ENCODE measurements at regions of chr4 and their contacts with region 1.

Region 1: GRCh38 chr4:158624889-158625478 is 46.7 kb downstream of the C4orf46 start:
- DNase-seq: no peak
- H3K4me3 ChIP-seq: no peak overlapping the region
- CTCF ChIP-seq: peak; percentile 49

Region 2: DNA sequence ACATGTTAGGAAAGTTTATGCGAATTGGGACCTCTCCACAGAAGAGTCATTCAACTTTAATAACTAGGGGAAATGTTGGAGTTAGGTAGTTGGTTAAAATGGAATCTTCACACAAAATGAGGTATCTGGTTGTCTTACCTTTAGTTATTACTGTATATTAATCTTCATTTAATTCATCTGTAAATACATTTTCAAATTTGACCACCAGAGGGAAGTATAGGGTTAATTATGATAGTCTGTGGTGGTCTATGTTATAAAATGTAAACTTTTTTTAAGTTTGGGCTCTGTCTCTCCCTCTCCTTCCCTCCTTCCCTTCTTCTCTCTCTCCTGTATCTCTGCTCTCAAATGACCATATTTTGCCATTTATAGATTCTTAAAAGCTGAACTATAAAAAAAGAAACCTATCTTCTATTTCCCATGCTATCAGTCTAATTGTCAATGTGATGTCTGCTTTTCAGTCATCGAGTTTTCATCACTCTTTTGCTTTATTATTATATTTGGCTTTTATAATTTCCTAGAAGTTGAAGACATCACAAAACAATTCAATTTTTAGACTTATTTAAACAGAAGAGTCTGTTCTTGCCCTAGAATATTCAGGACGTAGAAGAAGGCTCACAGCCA is 364.9 kb before region 1 on chr4:
- CTCF ChIA-PET with region 1: interaction called, 121 read pairs
- POLR2A ChIA-PET with region 1: no interaction called
- DNase-seq: no peak
- H3K4me3 ChIP-seq: no peak overlapping the region
- CTCF ChIP-seq: peak; percentile 5

Region 3: GRCh38 chr4:158268553-158268952 is 356.4 kb before region 1 on chr4:
- CTCF ChIA-PET with region 1: interaction called, 28 read pairs
- POLR2A ChIA-PET with region 1: no interaction called
- DNase-seq: no peak
- H3K4me3 ChIP-seq: no peak overlapping the region
- CTCF ChIP-seq: no peak

Region 4: GRCh38 chr4:158277558-158277957 is 347.4 kb before region 1 on chr4:
- CTCF ChIA-PET with region 1: interaction called, 13 read pairs
- POLR2A ChIA-PET with region 1: no interaction called
- DNase-seq: no peak
- H3K4me3 ChIP-seq: no peak overlapping the region
- CTCF ChIP-seq: no peak

Region 5: DNA sequence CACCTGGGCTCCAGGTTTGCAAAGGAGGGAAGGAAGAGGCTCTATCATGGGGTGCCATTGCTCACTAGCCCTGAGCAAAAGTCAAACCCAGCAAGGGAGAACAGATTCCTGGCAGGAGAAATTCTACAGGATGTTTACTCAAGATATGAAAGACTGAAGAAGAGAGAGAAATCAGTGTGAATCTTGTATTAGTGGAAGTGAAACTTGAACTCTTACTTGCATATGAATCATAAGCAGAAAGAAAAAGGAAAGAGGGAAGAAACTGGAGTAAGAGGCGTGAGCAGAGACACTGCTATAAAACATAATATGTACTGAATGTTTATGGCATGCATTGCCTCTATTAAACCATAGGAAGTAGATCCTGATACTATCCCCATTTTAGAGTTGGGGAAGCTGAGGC is 14.2 kb before region 1 on chr4:
- CTCF ChIA-PET with region 1: interaction called, 11 read pairs
- POLR2A ChIA-PET with region 1: no interaction called
- DNase-seq: no peak
- H3K4me3 ChIP-seq: no peak overlapping the region
- CTCF ChIP-seq: no peak

Region 6: GRCh38 chr4:159273141-159273438 is 648.1 kb after region 1 on chr4:
- CTCF ChIA-PET with region 1: no interaction called
- POLR2A ChIA-PET with region 1: no interaction called
- DNase-seq: no peak
- H3K4me3 ChIP-seq: no peak overlapping the region
- CTCF ChIP-seq: no peak

Measured in AG04449 (cell line).